Calu3 (cell line): ENCODE measurements at regions of chr2 and their contacts with region 1.

Region 1: DNA sequence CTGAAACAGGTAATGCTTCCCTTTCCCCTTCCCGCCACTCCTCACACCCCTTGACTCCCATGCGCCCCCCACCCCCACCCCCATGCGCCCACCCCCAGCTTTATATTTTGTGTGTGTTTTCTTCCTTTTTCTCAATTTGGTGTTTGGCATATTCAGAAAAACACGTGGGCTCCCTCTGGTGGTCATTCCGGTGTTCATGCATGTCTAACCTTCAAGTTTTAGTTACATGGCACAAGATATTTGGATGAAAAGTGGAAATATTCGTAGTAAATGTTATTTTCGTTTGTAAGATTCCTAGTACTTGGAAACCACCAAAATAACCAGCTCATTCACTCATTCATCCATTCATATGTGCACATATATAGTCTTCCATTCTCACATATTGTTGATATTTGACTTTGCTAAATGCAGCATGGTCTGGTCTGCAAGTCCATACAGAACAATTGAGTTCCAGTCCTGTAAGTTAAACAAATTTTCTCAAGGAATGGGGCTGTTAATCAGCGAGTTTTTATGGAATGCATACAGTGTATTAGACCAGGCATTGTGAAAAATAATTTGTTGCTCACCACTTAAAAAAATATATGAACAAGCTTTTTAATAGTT is 143.6 kb upstream of the MAP3K20 start:
- DNase-seq: peak; percentile 68
- H3K4me3 Mint-ChIP-seq: no peak overlapping the region
- H3K27ac Mint-ChIP-seq: no peak overlapping the region
- H3K4me1 Mint-ChIP-seq: peaks cover 14% of the 10 kb centered on the region
- H3K27me3 Mint-ChIP-seq: peaks cover 14% of the 10 kb centered on the region
- CTCF ChIP-seq: peak; percentile 69

Region 2: DNA sequence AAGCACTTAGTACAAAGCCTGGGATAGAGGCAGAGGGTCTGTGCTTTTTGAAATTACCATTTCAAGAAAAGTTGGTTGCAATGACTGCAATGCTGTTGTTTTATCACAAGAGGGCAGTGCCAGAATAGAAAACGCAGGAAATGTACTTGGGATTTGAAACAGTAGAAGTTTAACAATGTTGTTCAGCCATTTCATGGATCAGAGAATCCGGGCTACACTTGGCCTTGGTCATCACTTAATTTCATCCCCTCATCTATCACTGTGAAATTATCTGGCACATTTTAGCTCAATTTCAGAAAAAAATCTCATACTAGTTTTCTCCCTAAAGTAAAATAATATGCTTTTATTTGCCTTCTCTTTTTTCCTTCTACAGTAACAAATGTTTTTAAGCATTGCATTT is 125.5 kb before region 1 on chr2:
- CTCF ChIA-PET with region 1: interaction called, 3 read pairs
- intact Hi-C with region 1: loop called (anchors 1 kb)
- DNase-seq: no peak
- H3K4me3 Mint-ChIP-seq: no peak overlapping the region
- H3K27ac Mint-ChIP-seq: no peak overlapping the region
- H3K4me1 Mint-ChIP-seq: no peaks in the 10 kb centered on the region
- H3K27me3 Mint-ChIP-seq: peaks cover 43% of the 10 kb centered on the region
- CTCF ChIP-seq: peak; percentile 75

Region 3: GRCh38 chr2:172813314-172813888 is 118.6 kb before region 1 on chr2:
- CTCF ChIA-PET with region 1: interaction called, 41 read pairs
- intact Hi-C with region 1: loop called (anchors 1 kb)
- DNase-seq: no peak
- H3K4me3 Mint-ChIP-seq: no peak overlapping the region
- H3K27ac Mint-ChIP-seq: no peak overlapping the region
- H3K4me1 Mint-ChIP-seq: no peaks in the 10 kb centered on the region
- H3K27me3 Mint-ChIP-seq: peaks cover 25% of the 10 kb centered on the region
- CTCF ChIP-seq: peak; percentile 32

Region 4: DNA sequence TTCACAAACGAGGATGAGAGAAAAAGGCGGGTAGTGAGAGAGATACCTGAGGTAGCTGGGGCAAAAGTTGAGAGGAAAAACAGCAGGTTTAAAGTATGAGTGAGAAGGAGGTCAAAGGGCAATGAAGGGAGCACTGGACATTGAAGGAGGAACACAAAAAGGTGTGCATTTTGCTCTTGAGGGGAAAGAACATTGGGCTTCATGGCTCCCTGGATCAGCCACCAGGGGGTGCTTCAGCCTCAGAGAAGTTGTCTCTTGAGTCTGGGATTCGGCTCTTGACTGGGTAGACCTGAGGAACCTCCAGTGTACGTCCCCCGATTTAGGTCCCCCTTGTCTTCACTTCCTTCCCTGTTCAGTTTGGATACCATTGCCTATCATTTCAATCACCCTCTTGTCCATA is 67.8 kb before region 1 on chr2:
- CTCF ChIA-PET with region 1: interaction called, 6 read pairs
- intact Hi-C with region 1: loop called (anchors 2 kb)
- DNase-seq: peak; percentile 43
- H3K4me3 Mint-ChIP-seq: no peak overlapping the region
- H3K27ac Mint-ChIP-seq: no peak overlapping the region
- H3K4me1 Mint-ChIP-seq: no peaks in the 10 kb centered on the region
- H3K27me3 Mint-ChIP-seq: peaks cover 14% of the 10 kb centered on the region
- CTCF ChIP-seq: peak; percentile 75

Region 5: GRCh38 chr2:173151671-173152398 is 219.8 kb after region 1 on chr2:
- CTCF ChIA-PET with region 1: no interaction called
- intact Hi-C with region 1: no loop called
- DNase-seq: no peak
- H3K4me3 Mint-ChIP-seq: no peak overlapping the region
- H3K27ac Mint-ChIP-seq: peak overlapping the region; percentile 39
- H3K4me1 Mint-ChIP-seq: peaks cover 17% of the 10 kb centered on the region
- H3K27me3 Mint-ChIP-seq: no peaks in the 10 kb centered on the region
- CTCF ChIP-seq: no peak